Activated CD4-positive, alpha-beta memory T cell treated with anti-CD3 and anti-CD28 coated beads for 36 hours (primary cell): ENCODE measurements at regions of chr20 and their contacts with region 1.

Region 1: GRCh38 chr20:4592316-4593148 is 129.2 kb upstream of the PRND start:
- DNase-seq: peak; percentile 60
- H3K4me3 Mint-ChIP-seq: peak overlapping the region; percentile 45
- H3K27ac Mint-ChIP-seq: no peak overlapping the region
- H3K4me1 Mint-ChIP-seq: peaks cover 5% of the 10 kb centered on the region
- H3K27me3 Mint-ChIP-seq: peaks cover under 1% of the 10 kb centered on the region

Region 2: DNA sequence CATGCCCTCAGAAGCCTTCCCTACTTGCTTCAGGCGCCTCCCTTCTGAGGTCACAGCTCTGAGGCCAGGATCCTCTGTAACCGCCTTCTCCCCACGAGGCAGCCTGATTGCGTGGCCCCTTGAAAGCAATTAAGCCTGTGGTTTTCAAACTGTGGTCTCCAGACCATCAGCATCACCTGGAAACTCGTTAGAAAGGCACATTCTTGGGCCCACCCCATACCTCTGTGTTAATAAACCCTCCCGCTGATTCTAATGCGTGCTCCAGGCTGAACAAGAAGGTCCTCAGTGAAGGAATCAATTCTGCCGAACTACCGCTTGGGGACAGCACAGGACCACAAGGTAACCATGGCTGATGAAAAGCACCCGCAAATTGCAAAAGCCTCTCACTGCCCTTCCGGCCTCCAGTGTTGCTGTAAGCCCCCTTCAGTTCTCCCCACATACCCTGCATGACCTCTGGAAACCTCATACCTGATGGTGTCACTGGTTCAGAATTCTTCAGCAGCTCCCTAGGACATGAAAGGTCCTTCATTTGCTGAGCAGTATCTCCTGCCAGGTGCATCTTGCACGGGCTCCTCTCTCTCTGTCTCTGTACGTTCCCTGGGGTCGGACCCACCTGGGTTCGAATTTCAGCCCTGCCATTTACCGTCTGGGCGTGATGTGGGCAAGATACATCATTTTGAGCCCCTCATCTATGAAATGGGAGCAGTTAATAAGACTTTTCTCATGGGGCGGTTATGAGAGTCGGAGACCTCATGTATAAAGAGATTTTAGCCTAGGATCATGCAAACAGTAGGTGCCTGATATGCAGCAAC is 483.8 kb before region 1 on chr20:
- CTCF ChIA-PET with region 1: interaction called, 7 read pairs
- POLR2A ChIA-PET with region 1: no interaction called
- intact Hi-C with region 1: loop called (anchors 1 kb)
- DNase-seq: peak; percentile 82
- H3K4me3 Mint-ChIP-seq: no peak overlapping the region
- H3K27ac Mint-ChIP-seq: peak overlapping the region; percentile 15
- H3K4me1 Mint-ChIP-seq: peaks cover 22% of the 10 kb centered on the region
- H3K27me3 Mint-ChIP-seq: no peaks in the 10 kb centered on the region

Region 3: DNA sequence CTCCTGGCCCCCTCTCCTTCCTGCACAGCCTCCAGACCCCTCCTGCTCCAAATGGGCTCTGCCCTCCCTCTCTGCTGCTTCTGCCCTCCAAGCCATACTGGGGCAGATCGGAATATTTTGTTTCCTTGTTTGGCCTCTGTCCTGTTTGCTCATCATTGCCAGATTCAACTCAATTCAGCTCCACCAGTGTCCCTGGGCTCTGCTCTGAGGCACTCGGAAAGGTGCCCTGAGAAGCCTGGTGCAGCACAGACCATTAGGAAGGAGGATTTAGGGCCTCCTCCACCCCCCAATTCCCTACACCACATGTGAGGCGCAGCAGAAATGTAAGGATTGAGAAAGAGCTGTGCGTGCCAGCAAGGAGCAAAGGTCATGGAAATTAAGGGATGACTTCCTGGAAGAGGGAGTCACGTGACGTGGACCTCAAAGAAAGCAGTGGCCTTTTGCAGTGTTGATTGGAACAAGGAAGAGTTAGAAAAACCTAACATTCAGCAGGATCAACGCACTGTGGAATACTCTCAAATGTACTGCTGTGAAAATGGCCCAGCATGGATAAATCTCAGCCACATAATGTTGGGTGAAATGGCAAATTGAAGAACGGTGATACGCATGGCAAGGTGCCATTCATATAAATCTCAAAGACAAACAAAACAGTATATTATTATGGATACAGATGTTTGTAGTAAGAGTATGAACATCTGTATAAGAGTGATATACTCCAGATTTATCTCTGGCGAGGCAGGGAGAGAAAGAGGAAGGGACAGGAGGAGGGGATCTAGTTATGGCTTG is 347.6 kb before region 1 on chr20:
- CTCF ChIA-PET with region 1: interaction called, 3 read pairs
- POLR2A ChIA-PET with region 1: no interaction called
- intact Hi-C with region 1: loop called (anchors 2 kb)
- DNase-seq: no peak
- H3K4me3 Mint-ChIP-seq: no peak overlapping the region
- H3K27ac Mint-ChIP-seq: no peak overlapping the region
- H3K4me1 Mint-ChIP-seq: no peaks in the 10 kb centered on the region
- H3K27me3 Mint-ChIP-seq: peaks cover 55% of the 10 kb centered on the region